GM23248 (cell line): ENCODE measurements at regions of chr2 and their contacts with region 1.

Region 1: GRCh38 chr2:58448065-58448507 is 207.0 kb upstream of the FANCL start:
- DNase-seq: peak; percentile 80
- H3K4me3 ChIP-seq: no peak overlapping the region
- H3K27ac ChIP-seq: no peak overlapping the region
- H3K4me1 ChIP-seq: 0 out of 2 replicates have a peak, but pooled peaks cover 4% of the 10 kb centered on the region
- H3K27me3 ChIP-seq: no peaks in the 10 kb centered on the region

Region 2: DNA sequence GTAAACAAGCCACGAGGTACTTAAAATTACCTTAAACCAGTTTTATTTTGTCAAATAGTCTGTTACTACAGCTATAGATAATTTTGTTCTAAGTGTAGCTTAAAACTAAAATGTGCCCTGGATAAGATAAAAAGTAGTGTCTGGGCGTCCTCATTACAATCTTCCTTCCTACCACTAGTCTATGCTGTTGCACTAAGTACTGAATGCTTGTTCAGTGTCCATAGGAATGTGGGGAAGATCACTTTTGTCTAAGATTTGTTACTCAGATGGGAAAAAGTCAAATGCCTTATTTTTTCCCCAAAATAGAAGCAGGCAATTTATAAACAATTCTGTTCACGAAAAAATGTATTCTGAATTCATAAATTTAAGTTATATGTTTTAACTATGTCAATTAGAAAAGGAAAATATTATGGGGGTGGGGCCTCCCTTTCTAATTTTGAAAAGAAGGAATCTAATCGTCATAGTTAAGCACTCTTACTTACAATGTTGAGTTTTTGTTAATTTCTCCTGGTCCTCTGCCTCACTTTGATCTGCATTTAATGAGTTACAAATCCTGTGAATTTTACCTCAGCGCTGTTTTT is 541.8 kb before region 1 on chr2:
- in situ Hi-C with region 1: loop called (anchors 25 kb)
- DNase-seq: peak; percentile 77
- H3K4me3 ChIP-seq: no peak overlapping the region
- H3K27ac ChIP-seq: no peak overlapping the region
- H3K4me1 ChIP-seq: no peaks in the 10 kb centered on the region
- H3K27me3 ChIP-seq: no peaks in the 10 kb centered on the region

Region 3: GRCh38 chr2:58131191-58132011 is 316.7 kb before region 1 on chr2:
- in situ Hi-C with region 1: loop called (anchors 25 kb)
- DNase-seq: peak; percentile 38
- H3K4me3 ChIP-seq: no peak overlapping the region
- H3K27ac ChIP-seq: no peak overlapping the region
- H3K4me1 ChIP-seq: peaks cover 16% of the 10 kb centered on the region
- H3K27me3 ChIP-seq: no peaks in the 10 kb centered on the region

Region 4: GRCh38 chr2:58508006-58508405 is 59.9 kb after region 1 on chr2:
- in situ Hi-C with region 1: no loop called
- DNase-seq: no peak
- H3K4me3 ChIP-seq: no peak overlapping the region
- H3K27ac ChIP-seq: no peak overlapping the region
- H3K4me1 ChIP-seq: no peaks in the 10 kb centered on the region
- H3K27me3 ChIP-seq: no peaks in the 10 kb centered on the region